ENCODE measurements at regions of chr15 and their contacts with region 1.

Region 1: DNA sequence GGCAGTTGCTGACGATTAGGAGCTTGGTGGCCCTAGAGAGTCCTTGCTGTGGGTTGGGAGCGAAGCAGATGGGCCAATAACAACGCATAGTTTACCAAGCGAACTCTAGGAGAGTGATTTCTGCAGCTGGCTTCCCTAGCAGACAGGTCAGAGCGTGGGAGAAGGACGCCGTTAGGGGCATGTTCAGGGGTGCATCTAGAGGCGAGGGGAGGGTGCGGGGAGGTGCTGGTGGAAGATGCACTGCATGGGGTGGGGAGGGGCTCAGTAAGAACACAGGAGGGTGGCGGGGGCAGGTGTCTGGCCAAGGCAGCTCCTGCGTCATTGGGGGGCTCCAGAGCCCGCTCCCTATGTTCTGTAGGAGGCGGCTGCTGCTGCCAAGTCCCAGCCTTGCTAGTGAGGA is 8.9 kb downstream of the APBA2 start:
- DNase-seq: no peak
- ATAC-seq: no peak
- H3K4me3 ChIP-seq: no peak overlapping the region
- H3K27ac ChIP-seq: no peak overlapping the region
- H3K4me1 ChIP-seq: no peaks in the 10 kb centered on the region
- H3K27me3 ChIP-seq: no peaks in the 10 kb centered on the region
- CTCF ChIP-seq: no peak

Region 2: DNA sequence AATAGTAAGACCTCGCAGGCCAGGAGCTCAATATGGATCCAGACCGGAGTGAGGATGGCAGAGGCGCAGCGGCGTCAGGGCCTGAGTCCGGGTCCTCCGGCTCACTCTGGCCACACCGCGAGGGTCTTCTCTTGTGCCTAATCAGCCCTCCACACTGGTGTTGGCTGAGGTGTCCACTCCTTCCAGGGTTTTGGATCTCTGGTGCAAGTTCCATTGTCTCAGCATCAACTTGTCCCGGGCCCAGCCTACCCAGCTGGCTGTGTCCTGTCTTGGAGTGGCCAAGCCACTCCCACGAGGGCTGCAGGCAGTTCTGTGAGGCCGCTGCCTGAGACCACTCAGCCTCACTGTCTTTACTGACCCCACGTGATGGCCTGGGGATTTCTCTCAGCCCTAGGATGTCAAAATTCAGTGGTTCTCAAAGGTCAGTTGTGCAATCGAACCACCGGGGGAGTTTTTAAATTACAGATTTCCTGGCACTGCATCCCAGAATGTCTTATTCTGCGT is 33.5 kb before region 1 on chr15:
- CTCF ChIA-PET with region 1: no interaction called
- POLR2A ChIA-PET with region 1: no interaction called
- in situ Hi-C with region 1: no loop called
- intact Hi-C with region 1: no loop called
- DNase-seq: no peak
- ATAC-seq: no peak
- H3K4me3 ChIP-seq: no peak overlapping the region
- H3K27ac ChIP-seq: no peak overlapping the region
- H3K4me1 ChIP-seq: no peaks in the 10 kb centered on the region
- H3K27me3 ChIP-seq: no peaks in the 10 kb centered on the region
- CTCF ChIP-seq: no peak

Region 3: DNA sequence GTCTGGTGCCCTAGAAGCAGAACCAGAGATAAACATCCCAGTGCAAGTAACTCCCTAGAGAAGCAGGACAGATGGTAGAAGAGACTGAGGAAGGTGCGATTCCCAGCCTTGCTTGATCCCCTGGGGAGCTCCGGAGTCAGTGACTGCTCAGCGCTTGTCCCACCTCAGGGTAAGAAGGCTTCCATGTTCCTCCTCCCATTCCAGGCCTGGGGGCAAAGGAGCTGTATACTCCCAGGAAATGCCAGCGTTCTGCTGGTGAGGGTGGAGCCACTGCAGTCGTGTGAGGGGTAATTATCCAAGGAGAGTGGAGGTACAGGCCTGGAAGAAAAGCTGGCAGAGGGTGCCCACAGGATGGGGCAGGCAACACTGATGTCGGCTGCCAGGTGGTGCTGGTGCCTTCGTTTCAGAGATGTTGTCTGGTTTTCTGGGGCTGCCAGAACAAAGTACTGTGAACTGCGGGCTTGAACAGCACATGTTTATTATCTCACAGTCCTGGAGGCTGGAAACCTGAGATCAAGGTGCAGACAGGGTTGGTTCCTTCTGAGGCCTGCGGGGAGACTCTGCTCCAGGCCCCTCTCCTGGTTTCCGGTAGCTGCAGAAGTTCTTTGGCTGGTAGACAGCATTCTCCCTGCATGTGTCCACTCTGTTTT is 21.0 kb before region 1 on chr15:
- CTCF ChIA-PET with region 1: no interaction called
- POLR2A ChIA-PET with region 1: interaction called, 16 read pairs
- in situ Hi-C with region 1: no loop called
- intact Hi-C with region 1: no loop called
- DNase-seq: no peak
- ATAC-seq: no peak
- H3K4me3 ChIP-seq: no peak overlapping the region
- H3K27ac ChIP-seq: no peak overlapping the region
- H3K4me1 ChIP-seq: no peaks in the 10 kb centered on the region
- H3K27me3 ChIP-seq: no peaks in the 10 kb centered on the region
- CTCF ChIP-seq: no peak

Region 4: GRCh38 chr15:29183071-29183831 is 288.6 kb after region 1 on chr15:
- CTCF ChIA-PET with region 1: no interaction called
- POLR2A ChIA-PET with region 1: no interaction called
- in situ Hi-C with region 1: no loop called
- intact Hi-C with region 1: no loop called
- DNase-seq: no peak
- ATAC-seq: 0 out of 2 replicates have a peak, but pooled peaks have one; percentile 26
- H3K4me3 ChIP-seq: no peak overlapping the region
- H3K27ac ChIP-seq: no peak overlapping the region
- H3K4me1 ChIP-seq: no peaks in the 10 kb centered on the region
- H3K27me3 ChIP-seq: no peaks in the 10 kb centered on the region
- CTCF ChIP-seq: no peak

Measured in Panc1 (cell line).